Mammary epithelial cell (primary cell): ENCODE measurements at regions of chr3 and their contacts with region 1.

Region 1: GRCh38 chr3:99753268-99753975 is 64.2 kb upstream of the CMSS1 start:
- DNase-seq: peak; percentile 60
- H3K4me3 ChIP-seq: no peak overlapping the region
- H3K27ac ChIP-seq: no peak overlapping the region
- H3K4me1 ChIP-seq: peaks cover 24% of the 10 kb centered on the region
- H3K27me3 ChIP-seq: no peaks in the 10 kb centered on the region
- CTCF ChIP-seq: peak; percentile 78 to 87

Region 2: GRCh38 chr3:98602078-98602678 is 1151.2 kb before region 1 on chr3:
- CTCF ChIA-PET with region 1: no interaction called
- dilution Hi-C with region 1: no loop called
- in situ Hi-C with region 1: no loop called
- intact Hi-C with region 1: loop called (anchors 5 kb)
- DNase-seq: peak; percentile 48
- H3K4me3 ChIP-seq: no peak overlapping the region
- H3K27ac ChIP-seq: no peak overlapping the region
- H3K4me1 ChIP-seq: no peaks in the 10 kb centered on the region
- H3K27me3 ChIP-seq: no peaks in the 10 kb centered on the region
- CTCF ChIP-seq: peak; percentile 82 to 83

Region 3: DNA sequence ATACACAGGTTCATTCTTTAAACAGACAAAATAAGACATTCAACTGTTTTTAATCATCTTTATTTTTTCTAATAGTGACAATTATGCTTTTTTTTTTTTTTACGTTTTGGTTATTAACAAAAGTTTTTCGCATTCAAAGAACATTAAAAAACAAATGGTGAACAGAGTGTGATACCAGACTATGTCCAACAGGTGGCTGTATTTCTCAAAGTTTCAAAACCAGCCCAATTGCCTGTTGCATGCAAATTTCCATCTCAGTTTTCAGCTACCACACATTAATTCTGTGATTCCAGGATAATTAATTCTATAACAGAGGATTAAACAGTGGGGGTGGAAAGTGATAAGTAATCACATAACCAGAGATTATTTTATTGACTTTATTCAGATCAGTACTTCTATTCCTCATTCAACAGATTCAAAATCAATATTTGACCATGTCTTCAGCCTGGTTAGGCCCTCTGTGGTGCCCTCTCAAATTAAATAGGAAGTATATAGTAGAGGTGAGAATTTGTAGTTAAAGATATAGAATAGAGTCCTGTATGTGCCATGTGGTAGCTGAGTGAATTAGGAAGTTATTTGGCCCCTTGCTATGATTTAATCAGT is 729.7 kb before region 1 on chr3:
- CTCF ChIA-PET with region 1: interaction called, 4 read pairs
- dilution Hi-C with region 1: loop called (anchors 25 kb)
- in situ Hi-C with region 1: loop called (anchors 10 to 25 kb)
- intact Hi-C with region 1: loop called (anchors 1 kb)
- DNase-seq: peak; percentile 34
- H3K4me3 ChIP-seq: no peak overlapping the region
- H3K27ac ChIP-seq: no peak overlapping the region
- H3K4me1 ChIP-seq: no peaks in the 10 kb centered on the region
- H3K27me3 ChIP-seq: no peaks in the 10 kb centered on the region
- CTCF ChIP-seq: peak; percentile 56 to 68

Region 4: GRCh38 chr3:99172736-99173657 is 580.4 kb before region 1 on chr3:
- CTCF ChIA-PET with region 1: interaction called, 3 read pairs
- dilution Hi-C with region 1: no loop called
- in situ Hi-C with region 1: no loop called
- intact Hi-C with region 1: loop called (anchors 2 kb)
- DNase-seq: peak; percentile 60
- H3K4me3 ChIP-seq: no peak overlapping the region
- H3K27ac ChIP-seq: no peak overlapping the region
- H3K4me1 ChIP-seq: no peaks in the 10 kb centered on the region
- H3K27me3 ChIP-seq: no peaks in the 10 kb centered on the region
- CTCF ChIP-seq: peak; percentile 82 to 84

Region 5: GRCh38 chr3:99532246-99532645 is 221.2 kb before region 1 on chr3:
- CTCF ChIA-PET with region 1: no interaction called
- dilution Hi-C with region 1: no loop called
- in situ Hi-C with region 1: no loop called
- intact Hi-C with region 1: loop called (anchors 1 kb)
- DNase-seq: peak; percentile 54
- H3K4me3 ChIP-seq: no peak overlapping the region
- H3K27ac ChIP-seq: no peak overlapping the region
- H3K4me1 ChIP-seq: peaks cover 12% of the 10 kb centered on the region
- H3K27me3 ChIP-seq: no peaks in the 10 kb centered on the region
- CTCF ChIP-seq: peak; percentile 60 to 86

Region 6: GRCh38 chr3:99579246-99579645 is 174.2 kb before region 1 on chr3:
- CTCF ChIA-PET with region 1: no interaction called
- dilution Hi-C with region 1: no loop called
- in situ Hi-C with region 1: no loop called
- intact Hi-C with region 1: no loop called
- DNase-seq: peak; percentile 60
- H3K4me3 ChIP-seq: no peak overlapping the region
- H3K27ac ChIP-seq: no peak overlapping the region
- H3K4me1 ChIP-seq: peaks cover 11% of the 10 kb centered on the region
- H3K27me3 ChIP-seq: no peaks in the 10 kb centered on the region
- CTCF ChIP-seq: no peak

Region 7: DNA sequence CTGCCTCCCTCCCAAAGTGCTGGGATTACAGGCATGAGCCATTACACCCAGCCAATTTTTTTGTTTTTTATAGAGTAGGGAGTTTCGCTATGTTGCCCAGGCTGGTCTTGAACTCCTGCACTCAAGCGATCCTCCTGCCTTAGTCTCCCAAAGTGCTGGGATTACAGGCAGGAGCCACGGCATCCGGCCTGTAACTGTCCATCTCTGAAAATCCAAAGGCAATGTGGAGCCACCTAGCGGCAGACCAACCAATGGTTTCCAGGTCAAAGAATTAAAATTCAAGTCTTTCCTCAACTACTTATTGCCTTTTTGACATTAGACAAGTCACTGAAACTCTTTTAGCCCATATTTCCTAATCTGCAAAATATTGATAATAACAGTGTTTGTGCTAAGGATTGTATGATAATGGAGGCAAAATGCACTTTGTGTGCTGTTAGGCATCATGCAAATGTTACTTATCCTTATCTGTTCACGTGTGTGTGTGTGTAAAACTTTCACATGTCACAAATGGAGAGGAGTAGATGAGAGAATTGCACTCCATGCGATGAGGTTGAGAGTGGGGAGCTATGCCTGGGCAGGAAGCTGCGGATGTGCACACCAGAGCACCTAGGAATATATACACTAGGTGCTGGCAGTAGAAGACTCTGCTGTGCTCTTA is 66.3 kb before region 1 on chr3:
- CTCF ChIA-PET with region 1: no interaction called
- dilution Hi-C with region 1: no loop called
- in situ Hi-C with region 1: no loop called
- intact Hi-C with region 1: loop called (anchors 2 kb)
- DNase-seq: peak; percentile 42
- H3K4me3 ChIP-seq: no peak overlapping the region
- H3K27ac ChIP-seq: no peak overlapping the region
- H3K4me1 ChIP-seq: no peaks in the 10 kb centered on the region
- H3K27me3 ChIP-seq: no peaks in the 10 kb centered on the region
- CTCF ChIP-seq: peak; percentile 73 to 84

Region 8: GRCh38 chr3:99909714-99910494 is 156.5 kb after region 1 on chr3:
- CTCF ChIA-PET with region 1: no interaction called
- dilution Hi-C with region 1: no loop called
- in situ Hi-C with region 1: no loop called
- intact Hi-C with region 1: no loop called
- DNase-seq: peak; percentile 73
- H3K4me3 ChIP-seq: no peak overlapping the region
- H3K27ac ChIP-seq: peak overlapping the region; percentile 58
- H3K4me1 ChIP-seq: peaks cover 24% of the 10 kb centered on the region
- H3K27me3 ChIP-seq: no peaks in the 10 kb centered on the region
- CTCF ChIP-seq: no peak

Region 9: GRCh38 chr3:99981138-99981537 is 227.7 kb after region 1 on chr3:
- CTCF ChIA-PET with region 1: no interaction called
- dilution Hi-C with region 1: no loop called
- in situ Hi-C with region 1: no loop called
- intact Hi-C with region 1: no loop called
- DNase-seq: no peak
- H3K4me3 ChIP-seq: no peak overlapping the region
- H3K27ac ChIP-seq: no peak overlapping the region
- H3K4me1 ChIP-seq: no peaks in the 10 kb centered on the region
- H3K27me3 ChIP-seq: no peaks in the 10 kb centered on the region
- CTCF ChIP-seq: no peak